Activated CD8-positive, alpha-beta T cell treated with anti-CD3 and anti-CD28 coated beads for 36 hours (primary cell): ENCODE measurements at regions of chr3 and their contacts with region 1.

Region 1: DNA sequence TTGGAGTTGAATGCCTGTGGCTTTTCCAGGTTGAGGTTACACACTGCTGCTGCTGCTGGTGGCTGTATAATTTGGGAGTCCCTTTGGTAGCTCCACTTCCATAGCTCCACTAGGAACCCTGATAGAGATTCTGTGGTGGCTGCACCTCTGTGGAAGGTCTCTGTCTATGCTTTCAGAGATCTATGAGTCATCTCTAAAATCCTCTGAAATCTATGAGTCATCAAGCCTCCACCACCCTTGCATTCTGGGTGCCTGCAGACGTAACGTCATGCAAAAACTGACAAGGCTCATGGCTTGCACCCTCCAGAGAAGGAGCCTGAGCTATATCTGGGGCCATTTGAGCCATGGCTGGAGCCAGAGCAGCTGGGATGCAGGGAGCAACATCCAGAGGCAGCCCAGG is 1037.0 kb upstream of the CFAP20DC start:
- DNase-seq: peak; percentile 65
- ATAC-seq: peak; percentile 95
- H3K4me3 Mint-ChIP-seq: no peak overlapping the region
- H3K27ac Mint-ChIP-seq: peak overlapping the region; percentile 82
- H3K4me1 Mint-ChIP-seq: peaks cover 49% of the 10 kb centered on the region
- H3K27me3 Mint-ChIP-seq: no peaks in the 10 kb centered on the region
- CTCF ChIP-seq: no peak

Region 2: GRCh38 chr3:60192297-60193114 is 105.7 kb after region 1 on chr3:
- CTCF ChIA-PET with region 1: no interaction called
- POLR2A ChIA-PET with region 1: no interaction called
- intact Hi-C with region 1: loop called (anchors 10 kb)
- DNase-seq: peak; percentile 64
- ATAC-seq: peak; percentile 83
- H3K4me3 Mint-ChIP-seq: no peak overlapping the region
- H3K27ac Mint-ChIP-seq: peak overlapping the region; percentile 70
- H3K4me1 Mint-ChIP-seq: peaks cover 40% of the 10 kb centered on the region
- H3K27me3 Mint-ChIP-seq: peaks cover 2% of the 10 kb centered on the region
- CTCF ChIP-seq: no peak